ENCODE measurements at regions of chr10 and their contacts with region 1.

Region 1: GRCh38 chr10:14812271-14812670 is 25.6 kb downstream of the CDNF start:
- DNase-seq: no peak
- ATAC-seq: no peak
- H3K4me3 Mint-ChIP-seq: no peak overlapping the region
- H3K27ac Mint-ChIP-seq: no peak overlapping the region
- H3K4me1 Mint-ChIP-seq: peaks cover 11% of the 10 kb centered on the region
- H3K27me3 Mint-ChIP-seq: no peaks in the 10 kb centered on the region
- CTCF ChIP-seq: no peak

Region 2: GRCh38 chr10:14798636-14799035 is 13.6 kb before region 1 on chr10:
- CTCF ChIA-PET with region 1: no interaction called
- POLR2A ChIA-PET with region 1: interaction called, 3 read pairs
- intact Hi-C with region 1: loop called (anchors 2 kb)
- DNase-seq: no peak
- ATAC-seq: no peak
- H3K4me3 Mint-ChIP-seq: no peak overlapping the region
- H3K27ac Mint-ChIP-seq: no peak overlapping the region
- H3K4me1 Mint-ChIP-seq: peaks cover 31% of the 10 kb centered on the region
- H3K27me3 Mint-ChIP-seq: no peaks in the 10 kb centered on the region
- CTCF ChIP-seq: no peak

Region 3: GRCh38 chr10:14826076-14826829 is 14.0 kb after region 1 on chr10:
- CTCF ChIA-PET with region 1: no interaction called
- POLR2A ChIA-PET with region 1: no interaction called
- intact Hi-C with region 1: no loop called
- DNase-seq: no peak
- ATAC-seq: no peak
- H3K4me3 Mint-ChIP-seq: no peak overlapping the region
- H3K27ac Mint-ChIP-seq: no peak overlapping the region
- H3K4me1 Mint-ChIP-seq: peaks cover 20% of the 10 kb centered on the region
- H3K27me3 Mint-ChIP-seq: no peaks in the 10 kb centered on the region
- CTCF ChIP-seq: no peak

Measured in activated B cell treated with CpG ODN at 0.5 μM for 24 hours (primary cell).